Left cardiac atrium (tissue), 4 donors: ENCODE measurements at regions of chr4 and their contacts with region 1.

Region 1: GRCh38 chr4:52983563-52984303 is 121.6 kb downstream of the RASL11B start:
- DNase-seq: no peak
- ATAC-seq: peak; percentile 79 to 81

Region 2: DNA sequence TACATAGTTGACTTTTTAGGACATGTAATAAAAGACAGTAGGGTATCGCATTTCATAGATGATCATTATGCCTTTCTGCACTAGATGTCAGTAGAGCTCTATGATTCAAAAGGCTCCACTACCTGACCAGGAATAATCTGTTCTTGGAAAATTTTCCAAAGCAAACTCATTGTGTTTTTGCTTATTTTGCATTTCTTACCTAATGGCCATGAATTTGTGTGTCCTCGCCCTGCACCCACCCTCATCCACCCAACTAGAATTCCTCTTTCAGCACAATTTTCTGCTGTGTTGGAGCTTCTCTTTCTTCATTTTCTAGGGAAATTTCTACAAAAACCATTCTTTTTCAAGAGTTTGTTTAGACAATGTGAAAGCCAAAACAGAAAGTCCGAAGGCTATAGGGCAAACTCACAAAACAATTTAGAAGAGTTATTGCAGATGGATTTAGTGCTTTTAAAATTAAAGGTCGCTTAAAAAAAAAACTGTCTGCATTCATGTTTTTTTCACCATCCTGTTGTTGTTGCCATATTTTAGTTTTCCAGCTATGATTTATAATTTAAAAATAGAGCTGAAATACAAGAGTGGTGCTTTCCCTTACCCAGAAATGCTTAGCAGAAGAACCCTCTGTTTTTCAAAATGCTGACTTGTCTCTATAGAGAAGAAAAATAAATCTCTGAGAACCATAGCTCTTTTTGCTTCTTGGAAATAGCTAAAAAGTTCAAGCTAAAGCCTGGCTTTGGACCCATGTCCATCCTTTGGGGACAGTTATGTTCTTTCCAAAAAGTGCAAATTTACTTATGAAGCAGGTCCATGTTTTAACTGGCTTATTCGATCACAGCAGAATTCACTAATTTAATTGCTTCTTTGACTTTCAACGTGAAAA is 748.9 kb before region 1 on chr4:
- intact Hi-C with region 1: loop called (anchors 2 to 10 kb)
- DNase-seq: no peak
- ATAC-seq: peak; percentile 70 to 83

Region 3: GRCh38 chr4:52376132-52376704 is 607.5 kb before region 1 on chr4:
- intact Hi-C with region 1: loop called (anchors 5 kb)
- DNase-seq: peak; percentile 26
- ATAC-seq: no peak

Region 4: DNA sequence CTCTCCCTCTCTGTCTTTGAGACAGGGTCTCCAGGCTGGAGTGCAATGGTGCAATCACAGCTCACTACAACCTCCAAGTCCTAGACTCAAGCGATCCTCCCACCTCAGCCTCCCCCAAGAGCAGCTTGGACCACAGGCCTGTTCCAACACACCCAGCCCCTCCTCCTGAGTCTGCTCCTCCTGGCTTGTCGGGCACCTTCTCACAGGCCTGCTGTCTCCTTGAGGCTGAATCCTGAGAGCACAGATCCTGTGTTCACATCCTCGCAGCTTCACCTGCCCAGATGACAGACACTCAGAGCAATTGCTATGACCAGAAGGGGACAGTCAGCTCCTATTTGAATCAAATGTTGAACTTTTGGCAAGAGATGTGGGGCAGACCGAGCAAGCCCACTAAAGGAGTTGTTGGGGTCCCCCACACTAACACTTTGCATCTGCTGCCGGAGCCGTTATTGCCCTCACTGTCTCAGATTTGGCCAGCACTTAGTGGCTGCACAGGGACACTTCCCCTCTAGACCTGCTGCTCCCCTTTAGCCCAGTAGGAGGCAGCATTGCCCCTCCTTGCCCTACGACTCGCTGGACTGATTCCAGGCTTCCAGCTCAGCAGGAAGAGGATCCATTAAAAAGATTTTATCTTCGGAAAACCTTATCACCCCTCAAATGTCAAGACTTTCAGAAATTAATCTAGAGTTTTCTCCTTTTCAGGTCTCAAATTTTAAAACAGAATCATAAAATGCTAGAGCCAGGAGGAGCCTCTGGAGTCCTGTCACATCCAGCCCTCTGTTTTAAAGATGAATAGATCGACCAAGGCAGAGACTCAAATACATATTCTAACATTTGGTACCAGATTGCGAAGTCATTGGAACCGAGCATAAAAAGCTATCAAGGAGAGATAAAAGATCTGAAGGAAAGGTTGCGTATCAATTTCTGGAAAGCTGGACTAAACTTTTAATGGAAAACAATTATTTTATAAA is 438.3 kb before region 1 on chr4:
- intact Hi-C with region 1: loop called (anchors 2 to 5 kb)
- DNase-seq: peak; percentile 82
- ATAC-seq: peak; percentile 82 to 94

Region 5: DNA sequence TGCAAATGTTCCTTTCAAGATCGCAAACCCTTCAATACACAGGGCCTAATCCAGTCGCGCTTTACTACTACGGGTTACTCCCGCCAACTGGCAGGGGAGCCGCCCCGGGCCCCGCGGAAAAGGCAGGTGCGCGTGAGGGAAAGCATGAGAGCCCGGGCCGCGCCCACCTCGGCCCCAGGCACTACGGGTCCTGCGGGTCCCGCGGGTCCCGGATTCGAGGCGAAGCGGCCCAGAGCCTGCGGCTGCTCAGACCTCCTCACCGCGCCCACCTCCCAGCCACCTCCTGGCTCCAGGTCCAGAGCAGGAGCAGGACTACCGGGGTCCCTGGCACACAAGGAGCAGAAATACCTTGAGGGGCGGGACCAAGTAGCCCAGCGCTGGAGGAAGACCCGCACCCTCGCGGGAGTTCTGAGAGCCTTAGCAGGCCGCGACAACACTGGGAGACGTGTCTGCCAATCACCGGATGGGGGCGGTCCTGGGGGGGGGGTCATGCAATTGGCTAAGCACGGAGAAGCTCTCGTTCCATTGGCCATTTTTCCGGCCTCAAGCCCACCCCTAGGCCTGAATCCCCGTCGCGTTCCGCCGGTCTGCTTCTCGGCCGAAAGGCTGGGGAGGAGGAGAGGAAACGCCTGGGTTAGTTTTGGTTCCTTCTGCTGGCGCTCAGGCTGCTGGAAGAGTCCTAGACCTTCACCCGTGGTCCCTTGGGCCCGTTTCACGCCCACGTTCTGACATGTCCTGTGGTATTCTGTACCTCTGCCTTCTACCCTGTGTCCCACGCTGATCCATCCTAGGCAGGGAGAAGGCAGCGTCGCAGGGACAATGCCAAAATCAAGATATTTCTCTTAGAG is 261.5 kb before region 1 on chr4:
- intact Hi-C with region 1: loop called in 1 of 2 experiments (anchors 10 kb)
- DNase-seq: peak; percentile 95
- ATAC-seq: peak; percentile 99 to 100

Region 6: DNA sequence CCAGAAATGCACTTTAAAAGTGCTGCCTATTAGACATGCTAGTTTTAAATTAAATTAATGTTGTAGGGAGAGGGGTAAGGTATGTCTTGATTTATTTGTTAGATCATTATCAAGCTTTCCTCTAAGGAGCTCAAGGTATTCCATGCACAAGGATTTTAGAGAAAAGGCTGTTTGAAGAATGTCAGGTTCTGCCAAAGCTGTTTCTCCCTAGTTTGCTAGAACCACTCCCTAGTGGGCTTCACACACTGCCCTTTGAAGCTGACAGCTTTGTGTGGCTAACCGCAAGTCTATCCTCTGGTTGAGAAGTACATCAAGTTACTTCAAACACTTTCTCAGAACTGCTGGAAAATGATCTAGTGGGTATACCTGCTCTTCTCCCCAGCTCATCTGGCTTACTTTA is 89.3 kb before region 1 on chr4:
- intact Hi-C with region 1: no loop called
- DNase-seq: no peak
- ATAC-seq: no peak

Region 7: GRCh38 chr4:53089936-53090729 is 106.4 kb after region 1 on chr4:
- intact Hi-C with region 1: no loop called
- DNase-seq: no peak
- ATAC-seq: peak in 1 of 2 donors; percentile 41